PC-3 (cell line): ENCODE measurements at regions of chr19 and their contacts with region 1.

Region 1: GRCh38 chr19:16851031-16851712 is 22.0 kb downstream of the SIN3B start:
- DNase-seq: peak; percentile 87
- ATAC-seq: peak; percentile 29
- H3K4me3 ChIP-seq: peak overlapping the region; percentile 1; the same call in 1 of the 2 replicates
- H3K27ac ChIP-seq: peak overlapping the region; percentile 97
- H3K4me1 ChIP-seq: peaks cover 36% of the 10 kb centered on the region
- H3K27me3 ChIP-seq: no peaks in the 10 kb centered on the region
- CTCF ChIP-seq: no peak

Region 2: GRCh38 chr19:16778796-16779411 is 72.3 kb before region 1 on chr19:
- CTCF ChIA-PET with region 1: no interaction called
- POLR2A ChIA-PET with region 1: interaction called, 4 read pairs
- intact Hi-C with region 1: loop called (anchors 1 kb)
- DNase-seq: peak; percentile 78
- ATAC-seq: peak; percentile 81
- H3K4me3 ChIP-seq: no peak overlapping the region
- H3K27ac ChIP-seq: no peak overlapping the region
- H3K4me1 ChIP-seq: no peaks in the 10 kb centered on the region
- H3K27me3 ChIP-seq: no peaks in the 10 kb centered on the region
- CTCF ChIP-seq: peak; percentile 87

Region 3: GRCh38 chr19:16897154-16897855 is 46.1 kb after region 1 on chr19:
- CTCF ChIA-PET with region 1: no interaction called
- POLR2A ChIA-PET with region 1: no interaction called
- intact Hi-C with region 1: no loop called
- DNase-seq: peak; percentile 76
- ATAC-seq: peak; percentile 70
- H3K4me3 ChIP-seq: peak overlapping the region; percentile 54
- H3K27ac ChIP-seq: no peak overlapping the region
- H3K4me1 ChIP-seq: peaks cover 6% of the 10 kb centered on the region; the same call in 1 of the 2 replicates
- H3K27me3 ChIP-seq: no peaks in the 10 kb centered on the region
- CTCF ChIP-seq: no peak